ENCODE measurements at regions of chr9 and their contacts with region 1.

Region 1: GRCh38 chr9:5450359-5451091 is at the start of gene CD274:
- DNase-seq: no peak
- ATAC-seq: peak; percentile 75
- H3K4me3 ChIP-seq: peak within 1 kb of the TSS; percentile 72
- H3K27ac ChIP-seq: peak within 1 kb of the TSS; percentile 97
- H3K4me1 ChIP-seq: peaks cover 46% of the 10 kb centered on the region
- H3K27me3 ChIP-seq: no peaks in the 10 kb centered on the region
- CTCF ChIP-seq: peak; percentile 57 to 86 (median 81)
- EP300 ChIP-seq: 0 out of 4 replicates have a peak, but pooled peaks of 1 of the 2 experiments have one; percentile 33
- POLR2A ChIP-seq: peak; percentile 95
- RAD21 ChIP-seq: peak; percentile 92
- polyA plus RNA-seq, gene CD274: 9.4 to 12.2 TPM

Region 2: DNA sequence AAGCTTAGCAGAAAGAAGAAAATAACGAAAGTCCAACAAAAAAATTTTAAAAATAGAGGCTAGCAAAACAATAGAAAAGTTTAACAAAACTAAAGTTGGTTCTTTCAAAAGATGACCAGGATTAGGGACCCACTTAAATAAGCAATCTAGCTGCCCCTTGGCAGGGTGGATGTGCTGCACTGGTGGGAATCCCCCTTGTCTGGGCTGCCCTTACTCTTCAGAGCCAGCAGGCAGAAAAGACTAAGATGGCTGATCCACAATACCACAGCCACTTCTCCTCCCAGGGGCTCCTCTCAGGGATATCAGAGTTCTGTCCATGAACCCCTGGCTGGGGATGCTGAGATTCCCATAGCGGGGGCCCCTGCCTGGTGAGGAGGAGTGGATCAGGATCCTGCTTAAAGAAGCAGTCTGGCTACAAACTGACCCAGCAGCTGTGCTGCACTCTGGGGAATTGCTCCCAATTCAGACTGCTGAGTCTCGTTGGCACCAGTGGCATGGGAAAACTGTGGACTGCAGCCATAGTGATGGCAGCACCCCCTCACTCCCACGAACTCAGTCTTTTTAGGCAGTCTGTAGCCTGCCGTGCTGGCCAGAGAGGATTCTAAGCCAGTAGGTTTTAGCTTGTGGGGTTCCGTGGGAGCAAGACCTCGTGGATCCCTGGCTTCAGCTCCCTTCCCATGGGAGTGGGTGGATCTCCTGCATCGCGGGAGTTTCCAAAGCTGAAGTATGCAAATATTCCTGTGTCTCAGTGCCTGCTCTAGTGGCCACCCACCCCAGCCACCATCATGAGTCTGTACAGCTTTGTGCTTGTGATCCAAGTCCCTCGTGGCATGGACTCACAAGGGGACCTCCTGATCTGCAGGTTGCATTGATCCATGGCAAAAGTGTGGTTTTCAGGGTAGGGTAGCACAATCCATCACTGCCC is 262.2 kb before region 1 on chr9:
- CTCF ChIA-PET with region 1: no interaction called
- POLR2A ChIA-PET with region 1: no interaction called
- RAD21 ChIA-PET with region 1: no interaction called
- SMC1A ChIA-PET with region 1: no interaction called
- in situ Hi-C with region 1: no loop called
- intact Hi-C with region 1: no loop called
- DNase-seq: no peak
- ATAC-seq: peak; percentile 76
- H3K4me3 ChIP-seq: no peak overlapping the region
- H3K27ac ChIP-seq: no peak overlapping the region
- H3K4me1 ChIP-seq: no peaks in the 10 kb centered on the region
- H3K27me3 ChIP-seq: no peaks in the 10 kb centered on the region
- CTCF ChIP-seq: no peak
- EP300 ChIP-seq: no peak
- POLR2A ChIP-seq: no peak
- RAD21 ChIP-seq: no peak

Region 3: DNA sequence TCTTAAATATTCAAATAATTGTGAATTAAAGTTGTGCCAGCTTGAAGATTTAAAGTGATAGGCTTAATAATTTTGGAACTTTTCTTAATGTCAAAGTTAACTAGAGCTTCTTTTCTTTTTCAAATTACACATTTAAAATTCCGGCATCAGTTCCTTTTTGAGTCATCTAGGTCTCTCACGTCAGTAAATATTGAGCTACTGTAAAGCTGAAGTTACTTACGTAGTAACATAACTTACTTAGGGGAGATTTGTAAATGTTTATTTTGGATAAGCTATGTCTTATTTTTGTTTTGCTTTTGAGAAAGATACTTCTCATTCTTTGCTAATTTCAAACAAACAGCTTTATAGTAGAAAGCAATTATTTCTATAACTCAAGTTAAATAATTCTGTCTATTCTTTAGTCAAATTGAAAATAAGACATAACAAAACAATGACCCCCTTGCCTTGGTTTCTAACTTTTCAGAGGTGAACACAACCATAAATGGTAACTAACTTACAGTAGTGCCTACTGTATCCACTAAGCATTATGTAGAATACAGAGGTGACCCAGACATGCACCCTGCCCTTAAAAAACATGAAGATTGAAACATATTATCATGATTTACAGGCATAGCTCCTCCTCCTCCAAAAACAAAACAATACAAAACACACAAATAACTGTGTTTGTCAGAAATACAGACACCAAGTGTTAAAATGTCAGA is 29.6 kb after region 1 on chr9:
- CTCF ChIA-PET with region 1: no interaction called
- POLR2A ChIA-PET with region 1: interaction called, 6 read pairs
- RAD21 ChIA-PET with region 1: interaction called, 19 read pairs
- SMC1A ChIA-PET with region 1: interaction called, 32 read pairs
- in situ Hi-C with region 1: no loop called
- intact Hi-C with region 1: no loop called
- DNase-seq: no peak
- ATAC-seq: peak; percentile 85
- H3K4me3 ChIP-seq: no peak overlapping the region
- H3K27ac ChIP-seq: peak overlapping the region; percentile 62
- H3K4me1 ChIP-seq: peaks cover 27% of the 10 kb centered on the region
- H3K27me3 ChIP-seq: no peaks in the 10 kb centered on the region
- CTCF ChIP-seq: no peak
- EP300 ChIP-seq: peak; percentile 37 to 47; a peak in 2 of 4 replicates
- POLR2A ChIP-seq: no peak
- RAD21 ChIP-seq: no peak

Region 4: GRCh38 chr9:5510360-5510931 is 59.9 kb after region 1 on chr9 and contains the start of gene PDCD1LG2:
- CTCF ChIA-PET with region 1: interaction called, 14 read pairs
- POLR2A ChIA-PET with region 1: interaction called, 26 read pairs
- RAD21 ChIA-PET with region 1: interaction called, 59 read pairs
- SMC1A ChIA-PET with region 1: interaction called, 54 read pairs
- in situ Hi-C with region 1: no loop called
- intact Hi-C with region 1: no loop called
- DNase-seq: peak; percentile 76
- ATAC-seq: peak; percentile 71
- H3K4me3 ChIP-seq: peak within 1 kb of the TSS; percentile 49
- H3K27ac ChIP-seq: peak within 1 kb of the TSS; percentile 82
- H3K4me1 ChIP-seq: peaks cover 39% of the 10 kb centered on the region
- H3K27me3 ChIP-seq: no peaks in the 10 kb centered on the region
- CTCF ChIP-seq: no peak
- EP300 ChIP-seq: peak in 1 of 2 experiments; percentile 89; a peak in 2 of 4 replicates
- POLR2A ChIP-seq: no peak
- RAD21 ChIP-seq: no peak
- polyA plus RNA-seq, gene PDCD1LG2: 1.5 to 2.5 TPM

Region 5: DNA sequence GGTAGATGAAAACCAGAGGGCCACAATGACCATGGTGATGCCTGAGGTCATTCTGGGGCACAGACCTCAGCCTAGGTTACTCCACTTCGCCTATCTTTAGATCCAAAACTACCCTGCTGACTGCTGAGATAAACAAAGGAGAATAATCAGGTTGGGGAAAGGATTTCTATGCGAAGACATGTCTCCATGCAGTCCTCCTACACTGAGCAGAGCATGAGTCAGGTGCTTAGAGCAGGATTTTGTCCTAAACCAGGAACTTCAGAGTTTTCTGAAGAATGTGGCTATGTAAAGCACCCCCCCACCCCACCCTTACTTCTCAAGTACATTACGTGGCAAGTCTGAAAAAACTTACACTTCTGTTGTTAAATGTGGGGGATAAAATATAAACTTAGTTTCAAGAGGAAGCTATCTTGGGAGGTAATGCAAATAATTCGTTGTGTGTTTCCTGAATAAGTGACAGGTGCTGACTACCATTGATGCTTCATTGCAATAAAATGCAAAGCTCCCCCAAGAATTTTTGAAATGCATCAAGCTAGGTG is 79.2 kb after region 1 on chr9:
- CTCF ChIA-PET with region 1: interaction called, 10 read pairs
- POLR2A ChIA-PET with region 1: interaction called, 10 read pairs
- RAD21 ChIA-PET with region 1: interaction called, 25 read pairs
- SMC1A ChIA-PET with region 1: interaction called, 14 read pairs
- in situ Hi-C with region 1: no loop called
- intact Hi-C with region 1: loop called (anchors 5 kb)
- DNase-seq: peak; percentile 73
- ATAC-seq: peak; percentile 62
- H3K4me3 ChIP-seq: peak overlapping the region; percentile 47; the same call in 1 of the 2 replicates
- H3K27ac ChIP-seq: peak overlapping the region; percentile 93
- H3K4me1 ChIP-seq: peaks cover 43% of the 10 kb centered on the region
- H3K27me3 ChIP-seq: no peaks in the 10 kb centered on the region
- CTCF ChIP-seq: no peak
- EP300 ChIP-seq: peak; percentile 9 to 59; a peak in 1 of 4 replicates
- POLR2A ChIP-seq: no peak
- RAD21 ChIP-seq: 0 out of 2 replicates have a peak, but pooled peaks have one; percentile 0

Region 6: DNA sequence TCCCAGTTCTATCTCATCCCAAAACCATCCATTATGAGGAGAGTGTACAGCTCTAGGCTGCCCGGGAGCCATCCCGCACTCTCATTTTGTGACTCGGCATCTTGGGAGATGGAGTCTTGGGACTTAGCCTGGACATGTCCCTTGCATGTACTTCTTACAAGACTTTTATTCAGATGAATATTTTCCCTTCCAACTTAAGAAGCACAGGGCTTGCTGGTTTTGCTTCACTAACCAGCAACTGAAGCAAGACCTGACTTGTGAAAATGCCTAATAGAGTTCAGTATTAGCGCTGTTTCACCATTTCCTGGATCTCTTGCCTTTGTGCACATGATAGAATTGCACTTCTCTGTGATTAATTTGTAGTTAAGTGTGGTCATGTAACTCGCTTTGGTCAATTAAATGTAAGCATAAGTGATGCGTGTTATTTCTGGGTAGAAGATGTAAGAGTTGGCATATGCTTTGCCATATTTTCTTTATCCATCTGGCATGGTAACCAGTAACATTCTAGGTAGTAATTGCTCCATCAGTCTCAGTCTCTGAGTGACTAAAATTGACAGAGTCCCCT is 115.6 kb after region 1 on chr9:
- CTCF ChIA-PET with region 1: interaction called, 8 read pairs
- POLR2A ChIA-PET with region 1: interaction called, 4 read pairs
- RAD21 ChIA-PET with region 1: interaction called, 8 read pairs
- SMC1A ChIA-PET with region 1: interaction called, 16 read pairs
- in situ Hi-C with region 1: no loop called
- intact Hi-C with region 1: no loop called
- DNase-seq: peak; percentile 91
- ATAC-seq: peak; percentile 91
- H3K4me3 ChIP-seq: no peak overlapping the region
- H3K27ac ChIP-seq: peak overlapping the region; percentile 80
- H3K4me1 ChIP-seq: peaks cover 39% of the 10 kb centered on the region
- H3K27me3 ChIP-seq: no peaks in the 10 kb centered on the region
- CTCF ChIP-seq: no peak
- EP300 ChIP-seq: 0 out of 4 replicates have a peak, but pooled peaks of 1 of the 2 experiments have one; percentile 49
- POLR2A ChIP-seq: no peak
- RAD21 ChIP-seq: no peak

Region 7: GRCh38 chr9:5628530-5629311 is 178.2 kb after region 1 on chr9 and contains the start of gene RIC1:
- CTCF ChIA-PET with region 1: interaction called, 10 read pairs
- POLR2A ChIA-PET with region 1: interaction called, 11 read pairs
- RAD21 ChIA-PET with region 1: interaction called, 17 read pairs
- SMC1A ChIA-PET with region 1: interaction called, 15 read pairs
- in situ Hi-C with region 1: no loop called
- intact Hi-C with region 1: no loop called
- DNase-seq: peak; percentile 67
- ATAC-seq: peak; percentile 69
- H3K4me3 ChIP-seq: peak within 1 kb of the TSS; percentile 98
- H3K27ac ChIP-seq: peak within 1 kb of the TSS; percentile 78
- H3K4me1 ChIP-seq: peaks cover 33% of the 10 kb centered on the region
- H3K27me3 ChIP-seq: no peaks in the 10 kb centered on the region
- CTCF ChIP-seq: no peak
- EP300 ChIP-seq: 0 out of 4 replicates have a peak, but pooled peaks of 1 of the 2 experiments have one; percentile 9
- POLR2A ChIP-seq: peak; percentile 84
- RAD21 ChIP-seq: no peak
- polyA plus RNA-seq, gene RIC1: 6.2 to 7.1 TPM

Measured in GM12878 (cell line).